ENCODE measurements at regions of chr2 and their contacts with region 1.

Region 1: DNA sequence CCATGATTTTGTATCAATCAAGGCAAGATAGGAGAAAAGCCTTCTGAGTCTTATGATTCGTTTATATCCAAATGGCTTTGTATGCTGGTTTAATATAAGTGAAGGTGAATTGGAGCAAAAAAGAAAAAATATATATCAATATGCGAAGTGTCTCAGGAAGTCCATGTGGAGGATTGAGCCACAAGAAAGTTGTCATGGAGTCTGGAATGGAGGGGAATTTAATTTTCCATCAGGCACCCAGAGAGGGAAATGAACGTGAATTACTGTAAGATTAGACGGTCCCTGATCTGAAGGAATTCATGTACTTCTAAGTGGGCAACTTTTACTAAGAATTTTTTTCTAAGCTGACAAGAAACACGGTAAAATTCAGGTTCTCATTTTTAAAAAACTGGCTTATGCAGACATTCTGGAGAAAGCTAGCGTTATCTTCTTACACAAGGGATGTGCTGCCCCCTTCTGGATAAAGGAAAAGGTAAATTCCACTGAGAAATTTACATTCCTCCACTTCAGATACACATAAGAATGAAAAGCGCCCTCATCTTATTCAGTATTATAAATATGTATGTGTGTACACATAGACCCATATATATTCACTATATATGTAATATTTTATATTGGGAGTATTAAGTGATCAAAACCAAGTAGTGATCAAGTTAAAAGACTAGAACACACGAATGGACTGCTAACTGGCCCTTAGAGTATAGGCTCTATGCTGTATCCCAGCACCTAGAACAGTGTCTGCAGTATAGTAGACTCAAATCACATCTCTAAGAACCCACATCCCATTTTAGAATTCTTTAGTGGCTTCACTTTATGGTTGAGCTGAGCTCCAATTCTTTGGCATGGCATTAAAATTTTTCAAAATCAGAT is 289.0 kb upstream of the TFPI start:
- DNase-seq: peak in 1 of 4 donors; percentile 37
- ATAC-seq: peak; percentile 80
- H3K4me3 ChIP-seq: no peak overlapping the region
- H3K27ac ChIP-seq: no peak overlapping the region
- H3K4me1 ChIP-seq: peaks cover 13% of the 10 kb centered on the region
- H3K27me3 ChIP-seq: no peaks in the 10 kb centered on the region
- CTCF ChIP-seq: peak; percentile 34 to 76 (median 59)
- POLR2A ChIP-seq: no peak

Region 2: DNA sequence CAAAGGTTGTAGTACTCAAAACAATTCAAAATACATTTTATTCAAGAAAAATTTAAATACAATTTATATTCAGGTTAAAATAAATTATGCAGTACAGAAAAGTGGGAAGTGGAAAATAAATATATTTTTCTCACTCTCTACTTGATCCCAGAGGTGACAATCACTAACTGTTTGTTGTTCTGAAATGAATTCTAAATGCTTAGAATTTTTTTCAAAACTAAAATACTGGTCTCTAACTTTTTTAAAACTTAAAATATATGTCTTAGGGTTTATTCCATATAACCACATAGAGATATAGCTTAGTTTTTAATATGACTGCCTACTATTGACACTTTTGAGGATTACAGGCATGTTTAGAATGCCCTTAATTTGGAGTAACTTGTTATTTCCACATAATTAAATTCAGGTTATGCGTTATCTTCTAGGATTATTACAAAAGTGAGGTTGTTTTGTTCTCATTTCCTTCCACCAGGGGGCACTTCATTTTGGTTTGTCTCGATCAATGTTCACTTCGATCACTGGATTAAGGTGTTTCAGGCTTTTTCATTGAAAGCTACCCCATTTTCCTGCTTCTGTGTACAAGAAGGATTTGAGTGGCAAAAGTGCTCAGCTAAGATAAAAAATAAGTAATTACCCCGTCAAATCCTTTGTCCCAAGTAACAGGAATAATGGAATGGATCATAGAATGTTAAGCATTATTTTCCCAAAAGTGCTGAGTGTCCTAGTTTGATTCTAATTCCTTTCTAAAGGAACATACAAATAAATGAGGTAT is 261.9 kb before region 1 on chr2:
- intact Hi-C with region 1: loop called (anchors 10 kb)
- DNase-seq: peak; percentile 19 to 36 (median 24)
- ATAC-seq: peak; percentile 77
- H3K4me3 ChIP-seq: no peak overlapping the region
- H3K27ac ChIP-seq: no peak overlapping the region
- H3K4me1 ChIP-seq: peaks cover 10% of the 10 kb centered on the region
- H3K27me3 ChIP-seq: no peaks in the 10 kb centered on the region
- CTCF ChIP-seq: peak in 6 of 7 experiments; percentile 51 to 76 (median 70)
- POLR2A ChIP-seq: no peak

Measured in body of pancreas (tissue), 4 donors.